Thyroid gland (tissue), 4 donors: ENCODE measurements at regions of chr12 and their contacts with region 1.

Region 1: GRCh38 chr12:49232940-49233841 is 31.7 kb upstream of the TUBA1C start:
- DNase-seq: no peak
- H3K4me3 ChIP-seq: no peak overlapping the region
- H3K27ac ChIP-seq: peak overlapping the region in 1 of 3 donors; percentile 10
- H3K4me1 ChIP-seq: peaks cover 0 to 9% of the 10 kb centered on the region in 2 donors
- H3K27me3 ChIP-seq: no peaks in the 10 kb centered on the region
- CTCF ChIP-seq: no peak
- POLR2A ChIP-seq: peak in 1 of 2 donors; percentile 9

Region 2: DNA sequence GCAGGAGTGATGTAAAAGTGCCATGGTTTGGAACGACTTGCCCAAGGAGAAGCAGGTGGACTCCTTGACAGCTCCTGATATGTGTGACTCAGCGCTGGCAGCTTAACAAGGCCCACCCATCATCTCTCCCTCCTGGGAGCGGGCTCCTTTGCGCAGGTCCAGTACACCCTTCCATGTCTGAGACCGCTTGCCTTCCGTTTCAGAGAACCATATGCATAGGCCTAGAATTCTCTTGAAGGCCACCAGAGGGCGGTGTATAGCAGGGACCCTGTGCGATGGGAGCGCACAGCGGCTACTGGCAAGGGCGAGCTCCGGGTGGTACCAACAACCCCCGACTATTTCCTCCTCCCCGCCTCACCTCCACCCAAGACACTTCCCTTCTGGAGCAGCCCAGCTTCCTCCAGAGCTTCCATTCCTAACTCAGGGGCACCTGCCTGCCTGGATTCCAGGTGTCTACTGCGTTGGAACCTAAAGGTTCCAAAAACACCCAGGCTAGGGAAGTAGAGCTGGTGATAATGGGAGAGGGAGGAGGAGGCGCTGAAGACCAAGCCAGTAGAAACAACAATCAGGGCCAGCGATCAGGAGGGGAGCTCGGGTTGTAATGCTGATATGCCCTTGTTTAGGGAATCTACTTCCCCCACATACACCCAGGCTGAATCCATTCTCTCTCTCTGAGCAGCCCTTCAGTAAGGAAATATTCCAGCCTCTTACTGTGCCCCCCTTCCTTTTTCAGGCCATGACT is 144.8 kb before region 1 on chr12:
- intact Hi-C with region 1: loop called (anchors 10 kb)
- DNase-seq: peak; percentile 88 to 89
- H3K4me3 ChIP-seq: no peak overlapping the region
- H3K27ac ChIP-seq: no peak overlapping the region
- H3K4me1 ChIP-seq: peaks cover 16 to 43% of the 10 kb centered on the region in 2 donors
- H3K27me3 ChIP-seq: peaks cover 12% of the 10 kb centered on the region
- CTCF ChIP-seq: peak; percentile 63 to 87 (median 80)
- POLR2A ChIP-seq: no peak

Region 3: DNA sequence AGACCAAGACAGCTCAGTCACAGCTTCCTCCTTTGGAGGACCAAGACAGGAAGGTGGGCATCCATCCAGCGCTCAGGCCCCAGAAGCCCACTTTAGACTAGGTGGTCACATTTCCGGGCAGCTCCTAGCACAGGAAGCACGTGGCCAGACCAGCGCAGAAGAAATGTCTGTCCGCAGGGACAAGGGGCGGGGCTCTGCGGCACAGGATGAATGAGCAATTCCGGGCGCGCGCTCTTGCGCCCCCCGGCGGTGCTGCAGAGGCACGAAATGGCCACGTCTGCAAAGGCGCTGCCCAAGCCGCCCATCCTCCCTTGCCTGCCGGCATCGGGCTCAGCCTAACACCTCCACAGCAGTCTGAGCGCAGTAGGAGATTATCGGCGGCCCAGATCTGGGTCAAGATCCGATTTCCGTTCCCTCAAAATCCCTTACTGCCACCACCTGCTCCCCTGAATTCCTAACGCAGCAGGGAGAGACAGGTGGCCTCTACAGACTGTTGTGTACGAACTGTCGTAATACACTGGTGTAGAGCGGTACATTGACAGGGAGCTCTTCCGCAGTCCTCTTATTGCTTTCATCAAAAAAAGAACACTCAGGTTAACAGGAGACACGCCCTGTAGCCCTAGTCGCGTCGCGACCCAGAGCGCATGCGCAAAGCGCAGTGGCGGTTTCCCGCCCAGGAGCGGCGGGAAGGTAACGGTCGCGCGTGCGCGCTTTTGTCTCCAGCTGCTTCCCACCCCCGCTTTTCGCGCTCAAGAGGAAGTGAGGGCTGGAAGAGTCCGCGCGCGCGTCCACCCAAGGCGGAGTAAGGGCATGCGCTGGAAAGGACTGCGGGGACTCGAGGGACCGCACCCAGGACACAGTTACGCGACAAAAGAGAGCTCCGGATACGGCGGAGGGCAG is 102.8 kb before region 1 on chr12:
- intact Hi-C with region 1: loop called (anchors 10 kb)
- DNase-seq: peak; percentile 95
- H3K4me3 ChIP-seq: peak overlapping the region; percentile 94 to 99 (median 96)
- H3K27ac ChIP-seq: peak overlapping the region; percentile 95 to 100 (median 96)
- H3K4me1 ChIP-seq: peaks cover 14 to 17% of the 10 kb centered on the region in 2 donors
- H3K27me3 ChIP-seq: no peaks in the 10 kb centered on the region
- CTCF ChIP-seq: peak; percentile 73 to 91 (median 78)
- POLR2A ChIP-seq: no peak

Region 4: DNA sequence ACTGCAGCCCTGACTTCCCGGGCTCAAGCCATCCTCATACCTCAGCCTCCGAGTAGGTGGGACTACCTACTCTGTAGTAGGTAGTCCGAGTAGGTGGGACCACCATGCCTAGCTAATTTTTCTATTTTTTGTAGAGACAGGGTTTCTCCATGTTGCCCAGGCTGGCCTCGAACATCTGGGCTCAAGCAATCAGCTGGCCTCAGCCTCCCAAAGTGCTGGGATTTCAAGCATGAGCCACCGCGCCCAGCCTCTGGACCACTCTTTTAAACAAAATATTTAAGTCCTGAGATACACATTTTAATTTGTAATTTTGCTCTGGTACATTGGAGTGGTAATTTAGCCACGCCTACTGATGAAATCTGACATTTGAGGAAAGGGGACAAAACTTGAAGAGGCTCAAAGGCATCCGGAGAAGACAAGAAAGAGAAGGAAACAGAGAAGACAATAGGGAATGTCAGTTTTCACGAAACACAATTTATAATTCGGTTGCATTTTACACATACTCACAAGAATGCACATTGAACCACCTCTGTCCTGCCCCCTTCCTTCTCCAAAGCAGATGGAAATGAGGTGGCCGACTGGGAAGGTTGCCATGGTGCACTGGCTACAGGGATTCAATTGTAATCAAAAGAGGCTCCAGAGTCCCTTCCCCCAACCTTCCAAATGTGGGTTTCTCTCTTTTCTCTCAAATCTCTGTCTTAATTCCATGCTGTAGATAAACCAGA is 34.6 kb before region 1 on chr12:
- intact Hi-C with region 1: loop called (anchors 5 kb)
- DNase-seq: no peak
- H3K4me3 ChIP-seq: no peak overlapping the region
- H3K27ac ChIP-seq: no peak overlapping the region
- H3K4me1 ChIP-seq: peaks cover 11 to 16% of the 10 kb centered on the region in 2 donors
- H3K27me3 ChIP-seq: no peaks in the 10 kb centered on the region
- CTCF ChIP-seq: no peak
- POLR2A ChIP-seq: no peak